ENCODE measurements at regions of chr2 and their contacts with region 1.

Region 1: DNA sequence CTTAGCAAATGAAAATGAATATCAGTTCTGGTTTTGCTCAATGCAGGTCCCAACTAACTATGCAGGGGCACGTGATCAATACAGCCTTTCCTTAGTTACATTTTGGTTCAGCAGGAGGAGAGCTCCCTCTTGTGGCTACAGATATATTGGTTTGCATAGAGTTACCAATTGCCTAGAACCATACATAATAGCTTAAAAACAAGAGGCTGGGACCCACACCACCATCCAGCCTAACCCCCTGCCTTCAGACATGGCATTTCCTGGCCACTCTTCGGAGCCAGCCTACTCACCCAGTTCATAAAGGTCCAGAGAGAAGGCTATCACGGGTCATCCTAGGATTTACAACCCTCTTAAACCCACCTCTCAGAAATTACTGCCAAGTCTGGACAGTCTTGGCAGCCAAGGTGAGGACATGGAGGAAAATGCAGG is 10.5 kb downstream of the CCDC93 start:
- DNase-seq: peak; percentile 85 to 90 (median 85)
- H3K4me3 ChIP-seq: no peak overlapping the region
- H3K27ac ChIP-seq: no peak overlapping the region
- H3K4me1 ChIP-seq: no peaks in the 10 kb centered on the region
- H3K27me3 ChIP-seq: no peaks in the 10 kb centered on the region

Region 2: DNA sequence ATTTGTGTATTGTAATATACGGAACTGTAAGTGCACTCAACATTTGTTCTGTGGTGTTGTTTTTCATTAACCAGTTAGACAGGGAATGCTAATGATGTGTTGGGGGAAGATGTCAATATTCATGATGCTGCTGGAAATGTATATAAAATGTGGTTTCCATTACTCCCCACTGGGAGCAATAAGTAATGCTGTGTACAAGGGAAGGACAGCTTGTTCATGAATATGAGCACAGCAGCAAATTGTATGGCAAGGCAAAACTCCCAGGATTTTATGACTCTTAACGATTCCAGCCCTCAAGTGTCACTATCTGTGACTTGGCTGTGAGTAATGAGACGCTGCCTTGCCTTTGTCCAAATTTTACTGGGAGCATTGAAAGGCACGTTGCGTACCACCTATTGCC is 501.3 kb before region 1 on chr2:
- CTCF ChIA-PET with region 1: no interaction called
- POLR2A ChIA-PET with region 1: no interaction called
- DNase-seq: no peak
- H3K4me3 ChIP-seq: no peak overlapping the region
- H3K27ac ChIP-seq: no peak overlapping the region
- H3K4me1 ChIP-seq: no peaks in the 10 kb centered on the region
- H3K27me3 ChIP-seq: no peaks in the 10 kb centered on the region

Region 3: GRCh38 chr2:117785740-117786139 is 217.7 kb before region 1 on chr2:
- CTCF ChIA-PET with region 1: no interaction called
- POLR2A ChIA-PET with region 1: no interaction called
- DNase-seq: peak; percentile 49 to 66 (median 60)
- H3K4me3 ChIP-seq: no peak overlapping the region
- H3K27ac ChIP-seq: no peak overlapping the region
- H3K4me1 ChIP-seq: no peaks in the 10 kb centered on the region
- H3K27me3 ChIP-seq: peaks cover 0 to 2% (median 0%) of the 10 kb centered on the region in 5 experiments

Region 4: DNA sequence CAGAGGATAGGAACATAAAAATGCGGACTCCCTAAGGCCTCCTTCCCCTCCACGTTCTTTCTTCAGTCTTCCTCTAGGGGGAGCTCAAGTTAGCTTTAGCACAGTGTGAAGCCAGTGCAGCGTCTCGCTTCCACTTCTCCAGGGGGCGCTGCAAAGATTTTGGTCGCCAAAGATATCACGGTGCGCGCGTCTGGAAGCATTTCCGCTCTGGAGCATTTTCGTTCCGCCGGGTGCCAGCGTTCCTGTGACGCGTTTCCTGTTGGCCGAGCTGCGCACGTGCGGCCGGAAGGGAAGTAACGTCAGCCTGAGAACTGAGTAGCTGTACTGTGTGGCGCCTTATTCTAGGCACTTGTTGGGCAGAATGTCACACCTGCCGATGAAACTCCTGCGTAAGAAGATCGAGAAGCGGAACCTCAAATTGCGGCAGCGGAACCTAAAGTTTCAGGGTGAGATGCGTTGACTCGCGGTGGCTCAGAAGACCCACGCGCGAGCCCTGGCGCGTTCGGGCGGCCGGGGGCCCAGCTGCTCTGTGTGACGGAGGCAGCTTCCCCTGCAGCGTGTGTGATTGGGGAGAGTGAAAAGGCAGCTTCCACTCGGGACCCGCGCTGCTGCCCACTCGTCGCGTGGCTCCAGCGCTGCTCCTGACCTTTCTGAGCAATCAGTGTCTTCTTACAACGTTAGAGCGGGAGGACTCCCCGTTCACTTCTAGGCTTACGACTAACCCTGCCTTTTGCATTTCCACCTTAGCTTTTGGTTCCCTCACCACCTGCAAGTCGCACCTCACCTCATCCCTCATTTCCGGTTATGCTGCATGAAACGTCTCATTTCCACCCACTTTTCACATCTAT is 188.8 kb before region 1 on chr2 and contains the start of gene DDX18:
- CTCF ChIA-PET with region 1: interaction called, 27 read pairs
- POLR2A ChIA-PET with region 1: no interaction called
- DNase-seq: peak; percentile 99
- H3K4me3 ChIP-seq: peak within 1 kb of the TSS; percentile 77 to 100 (median 91)
- H3K27ac ChIP-seq: peak within 1 kb of the TSS; percentile 88 to 97
- H3K4me1 ChIP-seq: peaks cover 6 to 16% (median 8%) of the 10 kb centered on the region in 4 experiments
- H3K27me3 ChIP-seq: no peaks in the 10 kb centered on the region

Region 5: DNA sequence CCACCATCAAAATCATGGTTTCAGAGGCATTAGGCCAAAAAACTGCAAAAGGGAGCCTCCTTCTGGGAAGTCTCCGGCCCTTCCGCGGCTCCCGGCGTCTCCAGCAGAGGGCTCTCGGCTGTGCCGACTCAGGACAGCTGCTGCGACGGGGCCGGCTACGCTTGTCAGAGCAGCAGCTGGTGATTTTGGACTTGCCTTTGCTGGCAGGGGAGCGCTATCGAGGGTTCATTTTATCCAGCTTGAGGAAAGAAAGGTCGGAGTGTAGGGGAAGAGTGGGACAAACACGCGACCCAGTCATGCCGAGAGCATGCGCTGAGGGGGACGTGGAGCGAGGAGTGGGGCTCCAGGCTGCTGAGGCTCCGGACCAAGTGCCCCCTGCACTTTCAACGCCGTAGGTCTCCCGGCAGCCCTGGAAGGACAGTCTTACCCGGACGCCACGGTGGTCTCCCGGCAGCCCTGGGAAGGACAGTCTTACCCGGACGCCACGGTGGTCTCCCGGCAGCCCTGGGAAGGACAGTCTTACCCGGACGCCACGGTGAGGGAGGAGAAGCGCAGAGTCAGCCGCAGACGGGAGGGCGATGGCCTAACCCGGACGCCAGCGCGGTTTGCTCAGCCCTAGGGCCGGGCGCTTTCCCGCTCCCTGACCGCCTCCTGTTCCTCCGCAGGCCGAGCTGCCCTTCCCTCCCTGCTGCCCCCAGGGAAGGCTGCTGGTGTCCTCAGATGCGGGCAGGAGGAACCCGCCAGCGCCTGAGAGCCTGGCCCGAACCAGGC is 167.2 kb before region 1 on chr2:
- CTCF ChIA-PET with region 1: interaction called, 32 read pairs
- POLR2A ChIA-PET with region 1: no interaction called
- DNase-seq: peak; percentile 73 to 78 (median 76)
- H3K4me3 ChIP-seq: peak overlapping the region in 6 of 7 experiments; percentile 15 to 77 (median 60)
- H3K27ac ChIP-seq: no peak overlapping the region
- H3K4me1 ChIP-seq: peaks cover 0 to 9% (median 7%) of the 10 kb centered on the region in 4 experiments
- H3K27me3 ChIP-seq: peaks cover 0 to 9% (median 4%) of the 10 kb centered on the region in 5 experiments

Region 6: DNA sequence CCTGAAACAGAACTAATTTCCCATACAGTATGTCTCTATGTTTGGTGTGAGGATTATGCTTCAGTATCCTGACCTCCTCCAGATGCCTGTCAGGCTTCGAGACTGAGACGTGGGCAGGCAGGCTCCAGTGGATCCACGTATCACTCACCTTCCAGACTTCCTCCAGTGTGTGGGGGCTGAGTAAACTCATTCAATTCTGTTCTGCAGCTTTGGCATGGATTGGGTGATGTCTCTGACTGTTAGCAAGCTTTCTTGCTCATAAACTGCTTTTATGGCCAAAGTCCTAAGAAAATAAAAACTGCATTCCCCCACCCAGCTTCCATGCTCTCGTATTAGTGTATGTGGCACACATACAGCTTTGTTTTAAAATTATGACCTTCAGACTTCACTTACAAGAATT is 43.2 kb before region 1 on chr2:
- CTCF ChIA-PET with region 1: interaction called, 13 read pairs
- POLR2A ChIA-PET with region 1: no interaction called
- DNase-seq: no peak
- H3K4me3 ChIP-seq: no peak overlapping the region
- H3K27ac ChIP-seq: no peak overlapping the region
- H3K4me1 ChIP-seq: no peaks in the 10 kb centered on the region
- H3K27me3 ChIP-seq: no peaks in the 10 kb centered on the region

Region 7: GRCh38 chr2:117968722-117969121 is 34.7 kb before region 1 on chr2:
- CTCF ChIA-PET with region 1: interaction called, 11 read pairs
- POLR2A ChIA-PET with region 1: no interaction called
- DNase-seq: no peak
- H3K4me3 ChIP-seq: no peak overlapping the region
- H3K27ac ChIP-seq: no peak overlapping the region
- H3K4me1 ChIP-seq: no peaks in the 10 kb centered on the region
- H3K27me3 ChIP-seq: no peaks in the 10 kb centered on the region

Region 8: DNA sequence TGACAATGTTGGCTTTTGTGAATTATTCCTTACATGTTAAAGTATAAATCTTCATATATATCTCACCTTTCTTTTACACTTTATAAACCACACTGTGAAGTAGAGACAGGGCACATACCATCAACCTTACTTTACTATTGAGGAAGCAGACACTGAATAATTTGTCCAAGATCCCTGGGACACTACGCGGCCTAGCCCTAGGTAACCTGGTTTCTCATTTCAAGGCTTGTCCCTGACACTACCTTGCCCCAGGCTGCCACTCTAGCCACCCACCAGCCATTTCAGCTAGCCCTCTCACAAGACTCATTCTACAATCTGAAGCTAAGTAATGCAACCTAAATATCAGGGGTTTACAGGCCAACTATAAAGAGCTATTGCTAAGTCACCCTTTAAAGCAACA is 16.3 kb before region 1 on chr2:
- CTCF ChIA-PET with region 1: interaction called, 27 read pairs
- POLR2A ChIA-PET with region 1: no interaction called
- DNase-seq: no peak
- H3K4me3 ChIP-seq: no peak overlapping the region
- H3K27ac ChIP-seq: no peak overlapping the region
- H3K4me1 ChIP-seq: no peaks in the 10 kb centered on the region
- H3K27me3 ChIP-seq: no peaks in the 10 kb centered on the region

Region 9: DNA sequence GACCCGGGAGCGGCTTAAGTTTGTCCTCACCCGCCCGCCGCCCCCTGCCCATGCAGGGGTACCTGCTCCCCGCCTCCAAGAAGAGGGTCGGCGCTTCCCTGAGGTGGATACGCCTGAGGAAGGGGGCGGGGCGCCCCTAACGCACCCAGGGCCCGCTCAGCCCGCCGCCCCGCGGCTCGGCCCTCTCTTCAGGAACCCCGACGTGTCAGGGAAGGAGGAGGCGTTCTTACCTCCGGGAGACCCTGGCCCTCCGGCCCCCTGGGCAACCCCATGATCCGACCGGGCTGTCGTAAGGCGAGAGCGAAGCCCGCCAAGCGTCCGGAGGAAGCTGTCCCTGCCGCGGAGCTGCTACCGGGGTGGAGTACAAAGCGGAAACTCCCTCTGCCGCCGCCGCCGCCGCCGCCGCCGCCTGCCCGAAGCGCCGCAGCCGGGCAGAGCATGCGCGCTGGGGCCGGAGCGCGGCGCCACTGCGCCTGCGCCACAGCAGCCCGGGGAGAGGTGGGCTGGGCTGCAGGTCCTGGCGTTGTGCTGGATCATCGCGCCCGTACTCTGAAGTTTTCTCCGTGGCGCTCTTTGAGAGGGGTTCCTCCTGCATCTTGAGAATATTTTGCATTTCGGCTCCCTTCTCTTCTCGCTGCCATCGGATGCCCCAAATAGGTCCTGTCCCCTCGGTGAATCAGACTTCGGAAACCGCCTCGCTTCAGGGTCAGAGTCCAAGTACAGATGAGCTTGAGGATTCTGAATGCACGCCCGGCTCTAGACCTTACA is 10.5 kb after region 1 on chr2 and contains the start of gene CCDC93:
- CTCF ChIA-PET with region 1: interaction called, 28 read pairs
- POLR2A ChIA-PET with region 1: no interaction called
- DNase-seq: peak; percentile 84 to 92 (median 91)
- H3K4me3 ChIP-seq: peak within 1 kb of the TSS; percentile 80 to 93 (median 89)
- H3K27ac ChIP-seq: peak within 1 kb of the TSS; percentile 72 to 84
- H3K4me1 ChIP-seq: peaks cover 0 to 19% (median 16%) of the 10 kb centered on the region in 4 experiments
- H3K27me3 ChIP-seq: peaks cover 0 to 5% (median 0%) of the 10 kb centered on the region in 5 experiments

Region 10: DNA sequence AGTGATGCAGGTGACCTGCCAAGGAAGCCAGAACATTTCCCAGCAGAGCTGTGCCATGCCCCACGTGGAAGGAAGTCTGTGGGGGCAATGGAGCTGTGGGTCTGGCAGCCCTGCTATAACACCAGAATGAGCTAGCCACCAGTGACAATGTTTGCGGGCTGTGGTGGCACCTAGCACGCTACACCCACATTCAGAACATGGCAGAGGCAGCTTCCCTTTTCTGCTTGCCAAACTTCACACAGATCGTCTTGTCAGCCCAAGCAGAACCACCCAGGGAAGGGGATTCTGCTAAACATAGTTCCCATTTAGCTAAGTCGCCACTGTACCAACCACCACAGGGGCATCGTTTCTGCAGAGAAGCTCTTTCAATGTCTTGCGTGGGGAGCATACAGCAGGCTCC is 37.5 kb after region 1 on chr2:
- CTCF ChIA-PET with region 1: no interaction called
- POLR2A ChIA-PET with region 1: no interaction called
- DNase-seq: peak in 2 of 3 donors; percentile 73 to 83
- H3K4me3 ChIP-seq: no peak overlapping the region
- H3K27ac ChIP-seq: no peak overlapping the region
- H3K4me1 ChIP-seq: no peaks in the 10 kb centered on the region
- H3K27me3 ChIP-seq: peaks cover 0 to 12% (median 4%) of the 10 kb centered on the region in 5 experiments

Region 11: DNA sequence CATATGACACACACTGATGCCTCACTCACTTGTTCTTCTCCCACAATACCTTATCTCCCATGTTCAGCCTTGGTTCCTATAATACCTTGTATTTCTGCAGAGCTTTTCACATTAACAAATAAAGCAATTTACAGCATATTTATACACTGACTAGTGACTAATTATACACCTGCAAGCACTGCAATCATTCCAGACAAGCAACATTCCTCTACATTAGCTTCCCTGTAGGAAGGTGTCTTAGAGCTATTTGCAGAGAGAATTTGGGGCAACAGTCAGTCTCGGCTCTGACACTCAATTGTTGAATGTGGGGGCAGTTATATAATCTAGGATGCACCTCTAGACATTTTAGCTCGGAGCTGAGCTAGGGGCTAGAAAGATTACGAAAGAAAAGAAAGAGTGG is 75.3 kb after region 1 on chr2:
- CTCF ChIA-PET with region 1: no interaction called
- POLR2A ChIA-PET with region 1: no interaction called
- DNase-seq: no peak
- H3K4me3 ChIP-seq: no peak overlapping the region
- H3K27ac ChIP-seq: no peak overlapping the region
- H3K4me1 ChIP-seq: no peaks in the 10 kb centered on the region
- H3K27me3 ChIP-seq: peaks cover 0 to 3% (median 0%) of the 10 kb centered on the region in 5 experiments

Measured in common myeloid progenitor, CD34-positive (primary cell).